Psoas muscle (tissue), 8 donors: ENCODE measurements at regions of chr17 and their contacts with region 1.

Region 1: DNA sequence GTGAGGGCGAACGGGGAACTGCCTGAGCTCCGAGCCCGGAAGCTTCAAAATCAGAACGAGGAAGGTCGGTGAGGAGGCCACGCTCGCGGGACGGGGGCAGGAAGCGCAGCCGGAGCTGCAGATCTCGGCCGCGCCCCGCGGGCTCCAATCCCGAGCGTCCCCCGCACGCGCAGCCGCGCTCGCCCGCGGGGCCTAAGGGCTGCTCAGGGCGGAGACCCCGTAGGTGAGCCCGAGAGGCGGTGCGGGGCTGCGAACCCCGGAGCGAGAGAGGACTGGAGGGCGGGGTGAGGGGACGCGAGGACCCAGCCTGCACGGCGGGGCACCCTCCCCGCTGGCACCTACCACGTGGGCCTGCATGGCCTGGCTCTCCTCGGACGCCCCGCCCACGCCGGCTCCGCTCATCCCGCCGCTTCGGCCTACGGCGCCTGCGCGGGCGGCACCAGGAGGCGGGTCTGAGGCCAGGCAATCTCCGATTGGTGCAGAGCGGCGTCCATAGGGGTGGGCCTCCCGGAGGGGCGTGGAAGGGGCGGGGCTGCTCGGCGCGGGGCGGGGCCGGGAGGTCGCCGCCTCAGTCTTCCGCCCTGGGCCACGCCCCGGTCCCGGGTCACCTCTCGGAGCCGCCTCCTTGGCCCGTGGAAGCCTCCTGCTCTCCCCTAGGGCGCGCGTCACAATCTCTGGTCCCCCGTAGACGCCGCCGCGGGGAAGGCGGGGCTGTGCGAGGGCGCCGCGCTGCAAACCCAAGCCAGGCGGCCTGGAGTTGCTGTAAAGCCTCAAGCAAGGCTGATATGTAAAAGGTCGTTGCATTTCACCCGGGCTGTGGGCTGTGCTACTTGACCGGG is 27.8 kb upstream of the METRNL start:
- DNase-seq: peak; percentile 97 to 98
- ATAC-seq: peak; percentile 95 to 97 (median 96)
- H3K4me3 ChIP-seq: peak overlapping the region; percentile 80
- H3K27ac ChIP-seq: peak overlapping the region; percentile 86
- H3K4me1 ChIP-seq: peaks cover 9% of the 10 kb centered on the region
- H3K27me3 ChIP-seq: no peaks in the 10 kb centered on the region
- CTCF ChIP-seq: no peak

Region 2: GRCh38 chr17:83006515-83007455 is 44.8 kb before region 1 on chr17:
- intact Hi-C with region 1: no loop called
- DNase-seq: no peak
- ATAC-seq: peak; percentile 53 to 91 (median 68)
- H3K4me3 ChIP-seq: peak overlapping the region; percentile 45
- H3K27ac ChIP-seq: no peak overlapping the region
- H3K4me1 ChIP-seq: peaks cover 10% of the 10 kb centered on the region
- H3K27me3 ChIP-seq: no peaks in the 10 kb centered on the region
- CTCF ChIP-seq: no peak

Region 3: GRCh38 chr17:83076930-83077329 is 25.3 kb after region 1 on chr17:
- intact Hi-C with region 1: loop called in 1 of 2 experiments (anchors 2 kb)
- DNase-seq: no peak
- ATAC-seq: no peak
- H3K4me3 ChIP-seq: no peak overlapping the region
- H3K27ac ChIP-seq: no peak overlapping the region
- H3K4me1 ChIP-seq: peaks cover 7% of the 10 kb centered on the region
- H3K27me3 ChIP-seq: peaks cover 0 to 14% (median 7%) of the 10 kb centered on the region in 3 donors
- CTCF ChIP-seq: peak; percentile 12